Naive thymus-derived CD4-positive, alpha-beta T cell (primary cell): ENCODE measurements at regions of chr2 and their contacts with region 1.

Region 1: GRCh38 chr2:96960153-96960961 is 26.0 kb downstream of the FAM178B start:
- DNase-seq: peak; percentile 58 to 87 (median 75)
- ATAC-seq: peak; percentile 50
- H3K4me3 ChIP-seq: no peak overlapping the region
- H3K4me3 Mint-ChIP-seq: peak overlapping the region; percentile 37 to 83 (median 64)
- H3K27ac ChIP-seq: no peak overlapping the region
- H3K27ac Mint-ChIP-seq: peak overlapping the region; percentile 55 to 99 (median 92)
- H3K4me1 ChIP-seq: peaks cover 42 to 47% of the 10 kb centered on the region in 2 donors
- H3K4me1 Mint-ChIP-seq: peaks cover 36 to 57% (median 53%) of the 10 kb centered on the region in 7 donors
- H3K27me3 ChIP-seq: no peaks in the 10 kb centered on the region
- H3K27me3 Mint-ChIP-seq: peaks cover 0 to 2% (median 0%) of the 10 kb centered on the region in 5 donors

Region 2: GRCh38 chr2:96145036-96145847 is 815.1 kb before region 1 on chr2 and contains the start of gene DUSP2:
- CTCF ChIA-PET with region 1: no interaction called
- POLR2A ChIA-PET with region 1: interaction called, 3 read pairs
- intact Hi-C with region 1: loop called in 1 of 2 experiments (anchors 5 kb)
- DNase-seq: peak; percentile 79 to 97 (median 83)
- ATAC-seq: peak; percentile 61
- H3K4me3 ChIP-seq: peak within 1 kb of the TSS; percentile 69
- H3K4me3 Mint-ChIP-seq: peak within 1 kb of the TSS; percentile 90 to 98 (median 95)
- H3K27ac ChIP-seq: peak within 1 kb of the TSS; percentile 99
- H3K27ac Mint-ChIP-seq: peak within 1 kb of the TSS; percentile 96 to 100 (median 99)
- H3K4me1 ChIP-seq: peaks cover 50 to 52% of the 10 kb centered on the region in 2 donors
- H3K4me1 Mint-ChIP-seq: peaks cover 35 to 69% (median 62%) of the 10 kb centered on the region in 7 donors
- H3K27me3 ChIP-seq: no peaks in the 10 kb centered on the region
- H3K27me3 Mint-ChIP-seq: no peaks in the 10 kb centered on the region
- total RNA-seq, gene DUSP2: 22.1 to 255 (median 50.3) TPM

Region 3: GRCh38 chr2:96407041-96407918 is 553.1 kb before region 1 on chr2:
- CTCF ChIA-PET with region 1: no interaction called
- POLR2A ChIA-PET with region 1: no interaction called
- intact Hi-C with region 1: loop called in 1 of 2 experiments (anchors 5 kb)
- DNase-seq: peak; percentile 48 to 92 (median 88)
- ATAC-seq: peak; percentile 94
- H3K4me3 ChIP-seq: peak overlapping the region; percentile 49
- H3K4me3 Mint-ChIP-seq: peak overlapping the region; percentile 67 to 91 (median 83)
- H3K27ac ChIP-seq: peak overlapping the region; percentile 33
- H3K27ac Mint-ChIP-seq: peak overlapping the region; percentile 89 to 100 (median 96)
- H3K4me1 ChIP-seq: peaks cover 19 to 31% of the 10 kb centered on the region in 2 donors
- H3K4me1 Mint-ChIP-seq: peaks cover 18 to 51% (median 36%) of the 10 kb centered on the region in 7 donors
- H3K27me3 ChIP-seq: no peaks in the 10 kb centered on the region
- H3K27me3 Mint-ChIP-seq: no peaks in the 10 kb centered on the region

Region 4: GRCh38 chr2:96730212-96730611 is 230.1 kb before region 1 on chr2:
- CTCF ChIA-PET with region 1: no interaction called
- POLR2A ChIA-PET with region 1: no interaction called
- intact Hi-C with region 1: no loop called
- DNase-seq: no peak
- ATAC-seq: no peak
- H3K4me3 ChIP-seq: no peak overlapping the region
- H3K4me3 Mint-ChIP-seq: no peak overlapping the region
- H3K27ac ChIP-seq: no peak overlapping the region
- H3K27ac Mint-ChIP-seq: no peak overlapping the region
- H3K4me1 ChIP-seq: no peaks in the 10 kb centered on the region
- H3K4me1 Mint-ChIP-seq: peaks cover 0 to 11% (median 4%) of the 10 kb centered on the region in 7 donors
- H3K27me3 ChIP-seq: no peaks in the 10 kb centered on the region
- H3K27me3 Mint-ChIP-seq: no peaks in the 10 kb centered on the region

Region 5: GRCh38 chr2:96816128-96816835 is 144.1 kb before region 1 on chr2 and contains the start of gene CNNM3:
- CTCF ChIA-PET with region 1: interaction called, 4 read pairs
- POLR2A ChIA-PET with region 1: interaction called, 9 read pairs
- intact Hi-C with region 1: loop called (anchors 1 kb)
- DNase-seq: peak; percentile 89 to 99 (median 93)
- ATAC-seq: peak; percentile 96
- H3K4me3 ChIP-seq: peak within 1 kb of the TSS; percentile 74
- H3K4me3 Mint-ChIP-seq: peak within 1 kb of the TSS; percentile 86 to 96 (median 92)
- H3K27ac ChIP-seq: peak within 1 kb of the TSS; percentile 79
- H3K27ac Mint-ChIP-seq: peak within 1 kb of the TSS; percentile 75 to 96 (median 86)
- H3K4me1 ChIP-seq: peaks cover 37 to 43% of the 10 kb centered on the region in 2 donors
- H3K4me1 Mint-ChIP-seq: peaks cover 36 to 62% (median 58%) of the 10 kb centered on the region in 7 donors
- H3K27me3 ChIP-seq: no peaks in the 10 kb centered on the region
- H3K27me3 Mint-ChIP-seq: no peaks in the 10 kb centered on the region
- total RNA-seq, gene CNNM3: 32.1 to 51.5 (median 44.6) TPM

Region 6: DNA sequence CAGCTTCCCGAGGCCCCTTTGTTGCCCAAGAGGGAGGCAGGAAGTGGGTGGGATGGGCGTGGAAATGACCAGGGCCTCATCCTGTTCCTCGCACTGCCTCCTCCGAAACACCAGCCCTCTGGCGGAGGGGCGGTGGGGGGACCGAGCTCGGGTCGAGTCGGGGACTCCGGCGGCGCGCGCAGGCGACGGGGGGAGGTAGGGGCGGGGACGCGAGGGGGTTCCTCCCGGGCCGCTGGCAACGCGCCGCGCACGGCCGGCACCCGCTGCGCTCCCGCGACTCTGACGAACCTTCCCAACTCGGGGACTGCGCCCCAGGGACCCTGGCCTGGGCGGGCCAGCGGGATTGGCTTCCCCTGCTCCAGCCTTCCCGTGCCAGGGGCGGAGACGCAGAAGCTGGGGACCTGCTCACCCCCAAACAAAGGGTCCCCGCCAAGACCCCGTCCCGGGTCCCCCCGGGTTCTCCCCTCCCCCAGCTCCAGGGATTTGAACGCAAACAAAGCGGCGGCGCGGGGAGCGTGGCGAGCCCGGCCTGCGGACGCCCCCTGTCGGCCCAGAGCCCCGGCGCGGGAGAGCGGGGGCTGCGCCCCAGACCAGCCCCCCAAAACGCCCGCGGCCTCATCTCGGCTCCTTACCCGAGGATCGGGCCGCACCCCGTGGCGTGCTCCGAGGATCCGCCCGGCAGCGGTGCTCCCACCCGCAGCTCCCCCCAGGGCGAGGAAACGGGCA is 91.6 kb before region 1 on chr2:
- CTCF ChIA-PET with region 1: interaction called, 4 read pairs
- POLR2A ChIA-PET with region 1: interaction called, 288 read pairs
- intact Hi-C with region 1: loop called in 1 of 2 experiments (anchors 1 kb)
- DNase-seq: peak in 8 of 9 donors; percentile 37 to 71 (median 56)
- ATAC-seq: peak; percentile 37
- H3K4me3 ChIP-seq: peak overlapping the region; percentile 81
- H3K4me3 Mint-ChIP-seq: peak overlapping the region; percentile 81 to 95 (median 88)
- H3K27ac ChIP-seq: peak overlapping the region; percentile 84
- H3K27ac Mint-ChIP-seq: peak overlapping the region in 8 of 9 donors; percentile 75 to 92 (median 85)
- H3K4me1 ChIP-seq: peaks cover 24 to 32% of the 10 kb centered on the region in 2 donors
- H3K4me1 Mint-ChIP-seq: peaks cover 23 to 52% (median 42%) of the 10 kb centered on the region in 7 donors
- H3K27me3 ChIP-seq: no peaks in the 10 kb centered on the region
- H3K27me3 Mint-ChIP-seq: peaks cover 0 to 12% (median 0%) of the 10 kb centered on the region in 5 donors

Region 7: DNA sequence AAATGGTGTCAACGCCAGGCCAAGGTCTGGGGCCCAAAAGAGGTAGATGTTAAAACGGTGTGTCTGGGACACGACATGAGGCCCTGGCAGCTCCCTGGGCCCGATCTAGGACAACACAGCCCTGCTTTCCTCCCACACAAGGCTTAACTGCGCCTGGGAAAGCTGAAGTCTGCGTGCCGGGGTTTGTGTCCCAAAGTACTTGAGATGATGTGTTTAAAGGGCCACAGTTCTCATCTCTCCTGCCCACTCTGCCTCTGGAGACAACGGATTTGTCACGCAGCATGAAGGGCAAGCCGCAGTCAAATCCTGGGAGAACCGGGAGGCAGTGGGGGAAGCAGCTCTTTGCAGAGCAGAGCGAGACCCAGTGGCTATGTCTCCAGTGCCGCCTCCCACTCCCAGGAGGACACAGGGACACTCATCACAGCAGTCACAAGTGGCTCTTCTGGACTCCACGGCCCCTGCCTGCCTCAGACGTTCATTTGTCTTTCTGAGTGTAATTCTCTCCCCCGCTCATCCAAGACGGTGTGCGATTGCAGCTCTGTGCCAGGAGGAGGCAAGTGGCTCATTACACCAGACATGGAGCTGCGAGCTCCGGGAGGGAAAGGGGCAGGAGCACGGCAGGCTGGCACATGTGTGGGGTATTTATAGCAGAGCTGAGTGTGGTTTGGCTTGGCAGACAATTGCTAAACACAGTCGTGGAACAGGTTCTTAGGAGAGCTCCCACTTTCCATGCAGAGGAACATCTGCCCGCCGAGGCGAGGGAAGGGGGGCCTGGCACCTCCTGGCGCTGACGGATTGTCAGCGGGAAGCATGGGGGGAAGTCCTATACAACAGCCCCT is 32.7 kb before region 1 on chr2:
- CTCF ChIA-PET with region 1: no interaction called
- POLR2A ChIA-PET with region 1: interaction called, 4 read pairs
- intact Hi-C with region 1: loop called in 1 of 2 experiments (anchors 2 kb)
- DNase-seq: no peak
- ATAC-seq: no peak
- H3K4me3 ChIP-seq: no peak overlapping the region
- H3K4me3 Mint-ChIP-seq: no peak overlapping the region
- H3K27ac ChIP-seq: no peak overlapping the region
- H3K27ac Mint-ChIP-seq: no peak overlapping the region
- H3K4me1 ChIP-seq: peaks cover 19 to 23% of the 10 kb centered on the region in 2 donors
- H3K4me1 Mint-ChIP-seq: peaks cover 16 to 44% (median 29%) of the 10 kb centered on the region in 7 donors
- H3K27me3 ChIP-seq: no peaks in the 10 kb centered on the region
- H3K27me3 Mint-ChIP-seq: peaks cover 0 to 26% (median 0%) of the 10 kb centered on the region in 5 donors

Region 8: GRCh38 chr2:96977631-96978195 is 17.4 kb after region 1 on chr2:
- CTCF ChIA-PET with region 1: interaction called, 3 read pairs
- POLR2A ChIA-PET with region 1: interaction called, 3 read pairs
- intact Hi-C with region 1: loop called (anchors 1 kb)
- DNase-seq: peak in 5 of 9 donors; percentile 12 to 57 (median 24)
- ATAC-seq: peak; percentile 45
- H3K4me3 ChIP-seq: no peak overlapping the region
- H3K4me3 Mint-ChIP-seq: peak overlapping the region in 3 of 10 donors; percentile 2 to 31 (median 29)
- H3K27ac ChIP-seq: no peak overlapping the region
- H3K27ac Mint-ChIP-seq: peak overlapping the region in 5 of 9 donors; percentile 16 to 42 (median 33)
- H3K4me1 ChIP-seq: no peaks in the 10 kb centered on the region
- H3K4me1 Mint-ChIP-seq: peaks cover 0 to 15% (median 11%) of the 10 kb centered on the region in 7 donors
- H3K27me3 ChIP-seq: no peaks in the 10 kb centered on the region
- H3K27me3 Mint-ChIP-seq: no peaks in the 10 kb centered on the region

Region 9: DNA sequence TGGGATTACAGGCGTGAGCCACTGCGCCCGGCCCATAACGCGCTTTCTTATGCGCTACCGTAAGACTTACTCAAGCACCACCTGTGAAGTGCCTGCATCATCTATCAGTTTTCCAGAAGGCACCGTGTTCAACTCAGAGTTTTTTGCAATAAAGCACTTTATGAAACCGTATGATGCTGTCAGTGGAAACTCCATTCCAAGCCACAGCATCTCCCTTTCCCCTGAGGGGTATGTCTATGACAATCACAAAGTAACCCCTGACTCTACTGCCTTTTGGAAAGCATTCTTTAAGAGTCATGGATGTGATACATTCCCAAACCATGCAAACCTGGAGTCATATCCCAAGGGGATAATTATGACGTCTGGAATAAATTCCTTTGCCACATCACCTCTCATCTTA is 1687.2 kb after region 1 on chr2:
- CTCF ChIA-PET with region 1: no interaction called
- POLR2A ChIA-PET with region 1: no interaction called
- intact Hi-C with region 1: no loop called
- DNase-seq: no peak
- ATAC-seq: no peak
- H3K4me3 ChIP-seq: no peak overlapping the region
- H3K4me3 Mint-ChIP-seq: no peak overlapping the region
- H3K27ac ChIP-seq: no peak overlapping the region
- H3K27ac Mint-ChIP-seq: peak overlapping the region in 4 of 9 donors; percentile 21 to 96 (median 74)
- H3K4me1 ChIP-seq: peaks cover 21 to 29% of the 10 kb centered on the region in 2 donors
- H3K4me1 Mint-ChIP-seq: peaks cover 26 to 59% (median 45%) of the 10 kb centered on the region in 7 donors
- H3K27me3 ChIP-seq: no peaks in the 10 kb centered on the region
- H3K27me3 Mint-ChIP-seq: no peaks in the 10 kb centered on the region